ENCODE measurements at regions of chr6 and their contacts with region 1.

Region 1: GRCh38 chr6:150813319-150813992 is 52.0 kb upstream of the MTHFD1L start:
- DNase-seq: peak; percentile 92
- H3K4me3 ChIP-seq: no peak overlapping the region
- H3K27ac ChIP-seq: peak overlapping the region; percentile 54
- H3K4me1 ChIP-seq: peaks cover 12% of the 10 kb centered on the region
- H3K27me3 ChIP-seq: no peaks in the 10 kb centered on the region
- CTCF ChIP-seq: no peak

Region 2: GRCh38 chr6:150068720-150069648 is 744.5 kb before region 1 on chr6 and contains the start of gene ULBP3:
- CTCF ChIA-PET with region 1: no interaction called
- dilution Hi-C with region 1: no loop called
- in situ Hi-C with region 1: loop called in 1 of 2 experiments (anchors 25 kb)
- intact Hi-C with region 1: loop called (anchors 2 kb)
- DNase-seq: peak; percentile 98
- H3K4me3 ChIP-seq: peak within 1 kb of the TSS; percentile 63 to 88 (median 82)
- H3K27ac ChIP-seq: peak within 1 kb of the TSS; percentile 61
- H3K4me1 ChIP-seq: peaks cover 37% of the 10 kb centered on the region
- H3K27me3 ChIP-seq: no peaks in the 10 kb centered on the region
- CTCF ChIP-seq: peak; percentile 32 to 64
- total RNA-seq, gene ULBP3: 14.5 to 28.5 TPM

Region 3: DNA sequence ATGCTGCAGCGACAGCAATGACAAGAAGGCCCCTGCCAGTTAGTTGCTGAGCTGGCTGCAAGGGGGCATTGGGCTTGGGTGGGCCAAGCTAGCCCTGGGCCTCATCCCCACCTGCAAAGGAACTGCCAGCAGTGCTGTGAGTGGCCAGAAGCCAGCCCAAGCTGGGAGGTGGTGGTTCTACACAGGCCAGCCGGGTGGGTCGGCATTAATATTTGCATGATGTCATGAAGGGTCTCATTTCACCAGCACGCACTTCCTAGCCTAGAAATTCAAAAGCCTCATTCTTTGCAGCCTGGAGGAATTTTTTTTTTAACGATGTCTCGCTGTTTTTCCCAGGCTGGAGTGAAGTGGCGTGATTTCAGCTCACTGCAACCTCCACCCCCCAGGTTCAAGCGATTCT is 382.6 kb before region 1 on chr6:
- CTCF ChIA-PET with region 1: no interaction called
- dilution Hi-C with region 1: loop called (anchors 5 kb)
- in situ Hi-C with region 1: no loop called
- intact Hi-C with region 1: no loop called
- DNase-seq: no peak
- H3K4me3 ChIP-seq: no peak overlapping the region
- H3K27ac ChIP-seq: no peak overlapping the region
- H3K4me1 ChIP-seq: no peaks in the 10 kb centered on the region
- H3K27me3 ChIP-seq: no peaks in the 10 kb centered on the region
- CTCF ChIP-seq: no peak

Region 4: GRCh38 chr6:150491131-150491810 is 322.2 kb before region 1 on chr6:
- CTCF ChIA-PET with region 1: no interaction called
- dilution Hi-C with region 1: no loop called
- in situ Hi-C with region 1: no loop called
- intact Hi-C with region 1: no loop called
- DNase-seq: peak; percentile 93
- H3K4me3 ChIP-seq: no peak overlapping the region
- H3K27ac ChIP-seq: peak overlapping the region; percentile 92
- H3K4me1 ChIP-seq: peaks cover 39% of the 10 kb centered on the region
- H3K27me3 ChIP-seq: no peaks in the 10 kb centered on the region
- CTCF ChIP-seq: no peak

Region 5: GRCh38 chr6:150667977-150668716 is 145.3 kb before region 1 on chr6:
- CTCF ChIA-PET with region 1: no interaction called
- dilution Hi-C with region 1: no loop called
- in situ Hi-C with region 1: no loop called
- intact Hi-C with region 1: loop called (anchors 5 kb)
- DNase-seq: peak; percentile 93
- H3K4me3 ChIP-seq: no peak overlapping the region
- H3K27ac ChIP-seq: peak overlapping the region; percentile 80
- H3K4me1 ChIP-seq: peaks cover 16% of the 10 kb centered on the region
- H3K27me3 ChIP-seq: no peaks in the 10 kb centered on the region
- CTCF ChIP-seq: peak in 1 of 2 donors; percentile 51

Region 6: GRCh38 chr6:150744522-150745260 is 68.8 kb before region 1 on chr6:
- CTCF ChIA-PET with region 1: no interaction called
- dilution Hi-C with region 1: no loop called
- in situ Hi-C with region 1: no loop called
- intact Hi-C with region 1: no loop called
- DNase-seq: no peak
- H3K4me3 ChIP-seq: no peak overlapping the region
- H3K27ac ChIP-seq: no peak overlapping the region
- H3K4me1 ChIP-seq: peaks cover 8% of the 10 kb centered on the region
- H3K27me3 ChIP-seq: no peaks in the 10 kb centered on the region
- CTCF ChIP-seq: no peak

Region 7: DNA sequence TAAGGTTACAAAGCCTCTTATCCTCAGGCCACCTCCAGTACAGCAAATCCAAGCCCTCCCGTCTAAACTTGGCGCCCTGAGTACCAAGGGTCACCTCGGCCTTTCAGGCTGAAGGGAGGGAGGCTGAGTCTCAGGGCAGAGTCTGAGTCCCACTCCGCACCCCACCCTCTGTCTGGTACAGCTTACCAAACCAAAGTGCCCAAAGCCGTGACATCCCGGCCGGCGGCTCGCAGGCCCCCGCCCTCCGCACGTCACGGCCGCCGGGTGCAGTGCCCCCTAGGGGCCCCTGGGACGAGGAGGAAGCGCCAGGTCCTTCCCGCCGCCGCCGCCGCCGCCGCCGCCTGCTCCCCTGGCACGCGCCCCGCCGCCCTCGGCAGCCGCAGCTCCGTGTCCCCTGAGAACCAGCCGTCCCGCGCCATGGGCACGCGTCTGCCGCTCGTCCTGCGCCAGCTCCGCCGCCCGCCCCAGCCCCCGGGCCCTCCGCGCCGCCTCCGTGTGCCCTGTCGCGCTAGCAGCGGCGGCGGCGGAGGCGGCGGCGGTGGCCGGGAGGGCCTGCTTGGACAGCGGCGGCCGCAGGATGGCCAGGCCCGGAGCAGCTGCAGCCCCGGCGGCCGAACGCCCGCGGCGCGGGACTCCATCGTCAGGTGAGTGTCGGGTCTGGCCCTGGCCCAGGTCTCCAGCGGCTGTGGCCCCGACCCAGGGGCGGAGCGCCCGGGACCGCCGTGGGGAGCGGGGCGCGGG is 52.1 kb after region 1 on chr6 and contains the start of gene MTHFD1L:
- CTCF ChIA-PET with region 1: no interaction called
- dilution Hi-C with region 1: no loop called
- in situ Hi-C with region 1: no loop called
- intact Hi-C with region 1: loop called (anchors 1 kb)
- DNase-seq: peak; percentile 71
- H3K4me3 ChIP-seq: peak within 1 kb of the TSS; percentile 79 to 96 (median 89)
- H3K27ac ChIP-seq: peak within 1 kb of the TSS; percentile 87
- H3K4me1 ChIP-seq: peaks cover 12% of the 10 kb centered on the region
- H3K27me3 ChIP-seq: no peaks in the 10 kb centered on the region
- CTCF ChIP-seq: peak; percentile 34 to 64
- total RNA-seq, gene MTHFD1L: 56.7 to 77.7 TPM

Region 8: GRCh38 chr6:151335930-151336329 is 522.5 kb after region 1 on chr6:
- CTCF ChIA-PET with region 1: no interaction called
- dilution Hi-C with region 1: no loop called
- in situ Hi-C with region 1: no loop called
- intact Hi-C with region 1: loop called (anchors 2 kb)
- DNase-seq: no peak
- H3K4me3 ChIP-seq: no peak overlapping the region
- H3K27ac ChIP-seq: no peak overlapping the region
- H3K4me1 ChIP-seq: no peaks in the 10 kb centered on the region
- H3K27me3 ChIP-seq: no peaks in the 10 kb centered on the region
- CTCF ChIP-seq: no peak

Measured in mammary epithelial cell (primary cell).